Caco-2 (cell line): ENCODE measurements at regions of chr18 and their contacts with region 1.

Region 1: DNA sequence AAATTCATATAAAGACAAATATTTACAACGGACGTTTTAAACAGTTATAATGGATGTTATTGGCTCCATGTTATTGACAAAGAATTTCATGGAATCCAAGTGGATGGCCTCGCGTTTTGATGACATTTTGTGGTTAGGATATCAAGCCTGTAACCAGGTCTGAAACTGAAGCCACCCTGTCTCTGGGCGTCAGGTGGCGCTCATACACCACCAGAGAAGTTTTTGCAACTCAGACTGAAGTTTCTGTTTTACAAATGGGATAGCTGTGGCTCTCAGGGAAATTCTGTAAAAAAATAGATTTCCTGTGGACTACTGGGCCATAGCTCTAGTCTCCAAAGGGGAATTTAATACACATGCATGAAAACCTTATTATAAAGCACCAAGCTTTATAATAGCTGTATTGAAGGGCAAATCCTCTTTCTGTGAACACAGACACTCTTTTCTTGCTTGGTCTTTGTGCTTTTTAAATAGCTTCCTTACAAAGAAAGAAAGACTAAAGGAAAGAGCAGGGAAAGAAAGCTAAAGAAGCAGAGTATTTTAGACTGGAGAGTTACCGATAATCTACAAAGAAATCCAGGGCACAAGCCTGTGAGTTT is 86.7 kb downstream of the C18orf54 start:
- DNase-seq: peak; percentile 50 to 58
- H3K4me3 ChIP-seq: no peak overlapping the region
- H3K4me3 Mint-ChIP-seq: no peak overlapping the region
- H3K27ac Mint-ChIP-seq: no peak overlapping the region
- H3K4me1 ChIP-seq: 0 out of 2 replicates have a peak, but pooled peaks cover 3% of the 10 kb centered on the region
- H3K4me1 Mint-ChIP-seq: no peaks in the 10 kb centered on the region
- H3K27me3 ChIP-seq: no peaks in the 10 kb centered on the region
- H3K27me3 Mint-ChIP-seq: no peaks in the 10 kb centered on the region
- CTCF ChIP-seq: peak; percentile 58 to 68

Region 2: GRCh38 chr18:54580202-54580729 is 135.8 kb after region 1 on chr18:
- CTCF ChIA-PET with region 1: no interaction called
- POLR2A ChIA-PET with region 1: no interaction called
- intact Hi-C with region 1: no loop called
- DNase-seq: no peak
- H3K4me3 ChIP-seq: no peak overlapping the region
- H3K4me3 Mint-ChIP-seq: no peak overlapping the region
- H3K27ac Mint-ChIP-seq: no peak overlapping the region
- H3K4me1 ChIP-seq: no peaks in the 10 kb centered on the region
- H3K4me1 Mint-ChIP-seq: peaks cover 7% of the 10 kb centered on the region
- H3K27me3 ChIP-seq: no peaks in the 10 kb centered on the region
- H3K27me3 Mint-ChIP-seq: no peaks in the 10 kb centered on the region
- CTCF ChIP-seq: no peak

Region 3: DNA sequence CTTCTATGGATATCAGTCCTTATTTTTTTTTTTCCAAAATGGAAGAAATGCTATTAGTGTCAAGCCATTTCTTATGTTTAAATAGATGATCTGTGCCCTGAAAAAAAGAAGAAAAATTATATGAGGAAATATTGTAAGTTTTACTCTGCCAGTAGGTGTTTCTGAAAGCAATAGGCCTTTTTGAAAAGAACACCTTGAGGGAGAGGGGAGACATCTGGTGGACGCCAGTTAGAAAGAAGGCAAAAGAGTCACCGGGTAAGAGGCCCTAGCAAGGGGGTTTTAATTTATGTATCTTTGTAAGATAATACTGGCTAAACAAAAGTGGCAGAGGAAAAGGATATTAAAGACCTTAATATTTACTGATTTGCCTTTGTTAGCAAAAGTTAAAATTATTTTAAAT is 202.8 kb after region 1 on chr18:
- CTCF ChIA-PET with region 1: interaction called, 3 read pairs
- POLR2A ChIA-PET with region 1: no interaction called
- intact Hi-C with region 1: loop called (anchors 1 kb)
- DNase-seq: peak; percentile 37 to 42
- H3K4me3 ChIP-seq: no peak overlapping the region
- H3K4me3 Mint-ChIP-seq: no peak overlapping the region
- H3K27ac Mint-ChIP-seq: no peak overlapping the region
- H3K4me1 ChIP-seq: no peaks in the 10 kb centered on the region
- H3K4me1 Mint-ChIP-seq: no peaks in the 10 kb centered on the region
- H3K27me3 ChIP-seq: no peaks in the 10 kb centered on the region
- H3K27me3 Mint-ChIP-seq: no peaks in the 10 kb centered on the region
- CTCF ChIP-seq: peak; percentile 53

Region 4: DNA sequence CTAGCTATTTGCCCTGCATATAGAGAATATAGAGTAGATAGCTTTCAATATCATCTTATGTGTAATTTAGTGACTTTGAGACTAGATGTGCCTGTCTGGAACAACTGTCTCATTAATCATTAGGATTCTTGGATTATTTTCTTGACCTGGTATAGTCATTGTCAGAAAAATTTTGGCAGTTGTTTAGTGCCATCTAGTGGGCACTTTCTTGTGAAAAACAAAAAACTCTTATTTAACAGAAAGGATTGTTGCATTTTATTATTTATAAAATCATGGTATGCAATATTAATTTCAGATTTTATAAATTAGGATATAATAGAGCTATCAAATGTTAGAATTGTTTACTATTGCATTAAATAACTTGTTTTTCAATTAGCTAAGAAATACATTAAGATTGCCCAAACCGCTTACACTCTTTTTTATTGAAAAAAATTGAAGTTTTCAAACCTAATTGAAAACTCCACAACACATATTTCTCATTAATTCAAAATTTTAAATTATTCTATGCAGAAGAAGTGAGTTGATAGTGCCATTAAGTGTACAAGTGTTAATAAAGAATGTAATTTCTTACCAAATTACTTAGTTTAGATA is 227.0 kb after region 1 on chr18:
- CTCF ChIA-PET with region 1: interaction called, 3 read pairs
- POLR2A ChIA-PET with region 1: no interaction called
- intact Hi-C with region 1: loop called (anchors 1 kb)
- DNase-seq: peak in 1 of 2 experiments; percentile 5
- H3K4me3 ChIP-seq: no peak overlapping the region
- H3K4me3 Mint-ChIP-seq: no peak overlapping the region
- H3K27ac Mint-ChIP-seq: no peak overlapping the region
- H3K4me1 ChIP-seq: peaks cover 8% of the 10 kb centered on the region
- H3K4me1 Mint-ChIP-seq: peaks cover 7% of the 10 kb centered on the region
- H3K27me3 ChIP-seq: no peaks in the 10 kb centered on the region
- H3K27me3 Mint-ChIP-seq: no peaks in the 10 kb centered on the region
- CTCF ChIP-seq: peak; percentile 4 to 26